ENCODE measurements at regions of chr12 and their contacts with region 1.

Region 1: DNA sequence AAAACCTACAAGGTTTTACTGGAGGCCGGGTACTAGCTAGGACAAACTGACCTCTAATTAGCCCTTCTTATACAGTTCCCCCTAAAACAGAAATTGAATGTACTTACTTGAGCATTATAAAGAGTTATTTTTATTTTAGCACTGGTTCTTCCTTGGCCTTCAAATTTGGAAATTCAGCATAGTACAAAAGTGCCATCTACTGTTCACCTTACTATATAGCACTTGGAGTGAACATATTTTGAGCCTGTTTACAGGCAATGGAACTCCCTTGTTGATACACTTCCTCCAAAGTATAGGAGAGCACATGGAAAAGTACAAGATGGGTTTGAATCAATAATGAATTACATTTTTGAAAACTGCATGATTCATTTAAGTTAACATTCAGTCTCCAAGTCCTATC is 3.9 kb upstream of the POC1B start:
- DNase-seq: no peak
- ATAC-seq: peak; percentile 31
- H3K4me3 ChIP-seq: no peak overlapping the region
- H3K4me1 ChIP-seq: no peaks in the 10 kb centered on the region
- CTCF ChIP-seq: peak; percentile 40

Region 2: DNA sequence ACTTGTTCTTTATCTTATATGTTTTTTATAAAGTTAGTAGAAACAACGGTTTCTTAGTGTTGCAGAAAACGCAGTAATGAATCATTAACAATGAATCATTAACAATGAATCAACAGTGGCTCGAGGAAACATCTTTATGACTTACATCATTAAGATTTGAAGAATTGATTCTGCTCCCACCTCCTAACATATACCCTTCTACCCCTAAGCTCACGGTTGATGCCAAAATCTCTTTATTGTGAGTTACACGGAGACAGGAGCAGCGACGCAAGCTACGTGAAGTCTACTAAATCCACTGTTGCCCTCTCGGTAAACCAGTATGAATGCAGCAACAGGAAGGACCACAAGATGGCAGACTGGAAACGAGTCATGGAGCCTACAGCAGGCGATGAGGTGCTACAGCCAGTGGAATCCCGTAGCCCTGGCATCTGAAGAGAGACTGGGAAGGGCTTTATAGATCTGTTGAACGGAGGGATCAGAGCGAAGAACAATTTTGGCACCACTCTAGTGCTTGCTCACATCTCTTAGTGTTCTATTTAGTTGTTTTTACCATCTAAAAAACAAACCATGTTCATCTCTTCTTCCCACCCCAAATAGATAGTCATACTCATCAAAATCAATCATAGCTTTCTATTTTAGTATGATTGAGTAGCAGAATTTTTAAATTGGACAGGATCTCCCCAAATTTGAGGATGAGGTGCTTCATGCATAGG is 510.2 kb before region 1 on chr12:
- intact Hi-C with region 1: loop called in 1 of 2 experiments (anchors 2 kb)
- DNase-seq: peak in 2 of 3 donors; percentile 53 to 92
- ATAC-seq: peak; percentile 98
- H3K4me3 ChIP-seq: no peak overlapping the region
- H3K4me1 ChIP-seq: peaks cover 4% of the 10 kb centered on the region
- CTCF ChIP-seq: peak; percentile 67

Region 3: GRCh38 chr12:89648211-89648930 is 118.6 kb after region 1 on chr12:
- intact Hi-C with region 1: no loop called
- DNase-seq: peak in 1 of 3 donors; percentile 30
- ATAC-seq: peak; percentile 18
- H3K4me3 ChIP-seq: no peak overlapping the region
- H3K4me1 ChIP-seq: no peaks in the 10 kb centered on the region
- CTCF ChIP-seq: no peak

Measured in mucosa of descending colon (tissue), 3 donors.